Left cardiac atrium (tissue), 4 donors: ENCODE measurements at regions of chr17 and their contacts with region 1.

Region 1: DNA sequence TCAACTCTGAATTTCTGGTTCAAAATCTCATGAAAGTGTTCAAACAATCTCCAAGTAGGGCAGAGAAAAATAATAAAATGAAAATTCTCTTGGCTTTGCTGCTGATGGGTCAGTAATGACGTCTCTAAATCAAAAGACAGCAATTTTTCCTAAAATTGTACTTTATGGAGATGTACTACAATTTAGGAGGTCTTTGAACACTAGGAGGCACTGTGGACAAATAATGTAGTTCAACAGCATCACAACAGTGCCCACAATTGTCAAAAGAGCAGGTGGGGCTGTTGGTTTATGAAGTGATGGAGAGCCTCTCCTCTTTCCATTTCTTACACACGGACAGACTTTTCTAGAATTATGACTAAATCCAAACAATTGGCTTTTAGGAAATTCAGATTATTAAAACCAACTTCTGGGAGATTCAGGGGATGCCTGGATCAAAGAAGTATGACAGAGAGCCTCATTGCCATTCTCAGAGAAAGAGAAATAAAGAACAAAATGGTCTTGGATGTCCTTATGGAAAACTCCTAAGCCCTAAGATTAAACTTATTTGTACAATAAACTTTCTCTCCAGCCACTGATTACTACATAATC is 23.8 kb downstream of the EZH1 start:
- DNase-seq: no peak
- ATAC-seq: peak; percentile 61 to 80

Region 2: GRCh38 chr17:42760652-42761581 is 39.8 kb after region 1 on chr17 and contains the start of gene RAMP2:
- intact Hi-C with region 1: loop called (anchors 2 to 5 kb)
- DNase-seq: peak; percentile 46
- ATAC-seq: peak; percentile 62 to 71
- total RNA-seq, gene RAMP2: 40.9 to 49.7 TPM

Region 3: GRCh38 chr17:42819944-42820535 is 99.0 kb after region 1 on chr17:
- intact Hi-C with region 1: loop called in 1 of 2 experiments (anchors 5 kb)
- DNase-seq: peak; percentile 58
- ATAC-seq: no peak

Region 4: DNA sequence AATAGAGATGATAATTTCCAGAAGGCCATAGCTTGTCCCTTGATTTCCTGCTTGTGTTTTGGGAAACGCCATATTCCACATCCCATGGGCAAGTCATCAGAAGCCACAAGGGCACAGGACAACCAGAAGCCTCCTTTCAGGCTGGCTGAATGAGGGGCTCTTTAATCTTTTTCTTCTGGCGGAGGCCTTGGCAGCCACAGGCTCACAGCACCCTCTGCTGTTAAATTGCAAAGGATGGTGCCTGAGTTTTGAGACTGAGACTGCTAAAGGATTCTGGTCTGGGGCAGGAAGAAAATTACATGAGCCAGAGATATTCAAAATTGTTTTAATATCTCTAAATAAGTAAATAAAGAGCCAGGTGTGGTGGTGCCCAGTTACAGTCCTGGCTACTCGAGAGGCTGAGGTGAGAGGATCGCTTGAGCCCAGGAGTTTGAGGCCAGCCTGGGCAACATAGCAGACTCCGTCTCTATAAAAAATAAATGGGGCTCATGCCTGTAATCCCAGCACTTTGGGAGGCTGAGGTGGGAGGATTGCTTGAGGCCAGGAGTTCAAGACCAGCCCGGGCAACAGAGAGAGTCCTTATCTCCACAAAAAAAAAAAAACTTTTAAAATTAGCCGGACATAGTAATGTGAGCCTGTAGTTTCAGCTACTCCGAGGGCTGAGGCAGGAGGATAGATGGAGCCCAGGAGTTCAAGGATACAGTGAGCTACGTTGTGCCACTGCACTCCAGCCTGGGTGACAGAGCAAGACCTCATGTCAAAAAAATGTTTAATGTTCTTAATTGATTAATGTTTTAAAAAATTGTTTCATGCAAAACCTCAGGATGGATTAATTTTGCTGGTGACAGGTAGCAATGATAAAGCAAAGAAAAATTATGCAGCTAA is 216.9 kb after region 1 on chr17:
- intact Hi-C with region 1: loop called in 1 of 2 experiments (anchors 10 kb)
- DNase-seq: peak; percentile 26
- ATAC-seq: peak; percentile 76 to 84